ENCODE measurements at regions of chr15 and their contacts with region 1.

Region 1: DNA sequence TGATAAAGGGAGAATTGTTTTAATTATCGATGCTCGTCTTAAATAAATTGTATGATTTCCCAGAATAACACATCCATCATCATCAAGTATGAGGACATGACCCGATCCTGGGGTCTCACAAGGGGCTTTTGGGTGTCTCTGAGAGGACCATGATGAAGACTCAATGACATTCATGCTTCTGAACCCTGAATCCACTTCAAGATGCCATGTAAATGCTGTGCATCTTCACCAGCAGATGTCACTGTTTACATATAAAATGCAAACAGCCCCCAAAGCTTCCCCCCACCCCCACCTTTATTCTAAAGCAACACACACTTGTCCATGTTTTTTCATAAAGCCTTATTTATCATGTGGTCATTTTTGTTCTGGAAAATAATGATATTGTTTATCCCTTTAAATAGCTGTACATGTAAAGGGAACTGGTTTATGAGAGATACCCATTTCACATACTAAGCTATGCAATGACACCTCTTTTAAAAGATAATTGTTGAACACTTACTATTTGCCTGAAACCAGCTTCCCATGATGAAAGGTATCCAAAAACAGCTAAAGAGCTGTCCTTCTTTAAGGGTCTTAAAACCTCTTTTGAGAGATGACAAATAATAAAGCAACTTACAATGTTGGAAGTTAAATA is 69.7 kb upstream of the UBE3A start:
- DNase-seq: no peak
- ATAC-seq: peak; percentile 36; the same call in 1 of the 2 replicates
- H3K4me3 Mint-ChIP-seq: no peak overlapping the region
- H3K27ac Mint-ChIP-seq: no peak overlapping the region
- H3K4me1 Mint-ChIP-seq: peaks cover 51% of the 10 kb centered on the region
- H3K27me3 Mint-ChIP-seq: no peaks in the 10 kb centered on the region; the same call in 1 of the 2 replicates
- CTCF ChIP-seq: peak; percentile 36; the same call in 1 of the 2 replicates

Region 2: DNA sequence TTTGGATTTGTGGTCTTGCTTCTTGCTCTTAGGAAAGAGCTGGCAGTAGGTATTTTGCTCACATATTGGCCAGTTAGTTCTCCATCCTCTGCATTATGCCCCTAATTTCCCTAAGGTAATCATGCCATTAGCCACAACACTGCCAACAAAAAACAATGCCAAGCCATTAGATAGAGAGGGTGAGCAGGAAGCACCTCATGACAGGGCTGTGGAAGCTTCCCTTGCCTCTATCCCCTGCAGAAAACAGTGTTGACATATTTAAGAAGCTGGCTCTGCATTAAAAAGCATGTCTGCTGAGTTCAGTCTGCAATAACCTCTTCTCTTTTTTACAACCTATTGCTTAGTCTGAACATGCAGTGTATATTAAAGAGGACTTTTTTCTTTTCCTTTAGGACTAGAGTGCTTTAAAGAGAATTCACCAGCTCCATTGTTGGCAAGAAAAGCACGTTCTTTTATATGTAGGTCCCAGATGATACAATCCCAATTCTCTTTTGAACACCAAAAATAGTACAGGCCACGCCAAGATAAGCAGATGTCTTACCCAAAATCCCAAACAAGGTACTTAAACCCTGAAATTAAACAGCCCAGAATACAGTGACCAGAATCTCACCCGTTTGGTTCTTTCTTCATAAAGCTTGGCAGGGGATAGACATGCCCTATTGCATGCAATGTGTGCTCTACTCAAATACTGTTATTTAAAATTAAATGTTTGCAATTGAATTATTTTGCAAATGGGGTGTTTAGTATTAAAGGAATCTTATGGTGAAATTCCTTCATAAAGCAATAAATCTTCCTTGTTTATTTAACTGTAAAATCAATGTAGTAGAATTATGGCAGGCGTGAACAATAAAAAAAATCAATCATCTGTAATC is 24.0 kb after region 1 on chr15:
- CTCF ChIA-PET with region 1: interaction called, 10 read pairs
- POLR2A ChIA-PET with region 1: no interaction called
- DNase-seq: no peak
- ATAC-seq: no peak
- H3K4me3 Mint-ChIP-seq: no peak overlapping the region
- H3K27ac Mint-ChIP-seq: no peak overlapping the region
- H3K4me1 Mint-ChIP-seq: peaks cover 42% of the 10 kb centered on the region
- H3K27me3 Mint-ChIP-seq: no peaks in the 10 kb centered on the region
- CTCF ChIP-seq: no peak

Region 3: DNA sequence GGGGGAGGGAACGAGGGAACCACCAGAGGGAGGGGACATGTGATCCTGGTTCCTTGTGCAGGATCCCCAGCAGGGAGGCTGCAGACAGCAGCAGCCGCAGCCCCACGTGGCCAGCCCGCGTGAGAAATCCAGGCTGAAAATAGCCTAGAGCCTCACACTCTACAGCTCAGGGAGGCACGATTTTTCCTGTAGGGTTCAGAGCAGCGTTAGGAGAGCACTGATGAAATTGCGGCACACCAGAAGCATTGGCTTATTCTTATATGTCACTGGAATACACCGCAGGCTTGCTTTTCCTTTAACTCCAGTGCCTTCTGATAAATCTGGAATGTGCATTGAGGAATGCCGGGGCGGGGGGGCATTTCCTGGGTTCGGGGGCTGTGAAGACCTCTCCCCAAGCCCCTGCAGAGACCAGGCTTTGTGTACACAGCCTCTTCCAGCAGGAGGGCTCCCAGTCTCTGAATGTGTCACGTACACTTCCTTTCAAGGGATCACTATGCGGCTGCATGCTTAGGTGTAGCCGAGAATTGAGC is 161.6 kb after region 1 on chr15:
- CTCF ChIA-PET with region 1: interaction called, 14 read pairs
- POLR2A ChIA-PET with region 1: no interaction called
- DNase-seq: peak; percentile 76
- ATAC-seq: peak; percentile 90
- H3K4me3 Mint-ChIP-seq: peak overlapping the region; percentile 55
- H3K27ac Mint-ChIP-seq: peak overlapping the region; percentile 95
- H3K4me1 Mint-ChIP-seq: peaks cover 60% of the 10 kb centered on the region
- H3K27me3 Mint-ChIP-seq: no peaks in the 10 kb centered on the region
- CTCF ChIP-seq: no peak

Region 4: DNA sequence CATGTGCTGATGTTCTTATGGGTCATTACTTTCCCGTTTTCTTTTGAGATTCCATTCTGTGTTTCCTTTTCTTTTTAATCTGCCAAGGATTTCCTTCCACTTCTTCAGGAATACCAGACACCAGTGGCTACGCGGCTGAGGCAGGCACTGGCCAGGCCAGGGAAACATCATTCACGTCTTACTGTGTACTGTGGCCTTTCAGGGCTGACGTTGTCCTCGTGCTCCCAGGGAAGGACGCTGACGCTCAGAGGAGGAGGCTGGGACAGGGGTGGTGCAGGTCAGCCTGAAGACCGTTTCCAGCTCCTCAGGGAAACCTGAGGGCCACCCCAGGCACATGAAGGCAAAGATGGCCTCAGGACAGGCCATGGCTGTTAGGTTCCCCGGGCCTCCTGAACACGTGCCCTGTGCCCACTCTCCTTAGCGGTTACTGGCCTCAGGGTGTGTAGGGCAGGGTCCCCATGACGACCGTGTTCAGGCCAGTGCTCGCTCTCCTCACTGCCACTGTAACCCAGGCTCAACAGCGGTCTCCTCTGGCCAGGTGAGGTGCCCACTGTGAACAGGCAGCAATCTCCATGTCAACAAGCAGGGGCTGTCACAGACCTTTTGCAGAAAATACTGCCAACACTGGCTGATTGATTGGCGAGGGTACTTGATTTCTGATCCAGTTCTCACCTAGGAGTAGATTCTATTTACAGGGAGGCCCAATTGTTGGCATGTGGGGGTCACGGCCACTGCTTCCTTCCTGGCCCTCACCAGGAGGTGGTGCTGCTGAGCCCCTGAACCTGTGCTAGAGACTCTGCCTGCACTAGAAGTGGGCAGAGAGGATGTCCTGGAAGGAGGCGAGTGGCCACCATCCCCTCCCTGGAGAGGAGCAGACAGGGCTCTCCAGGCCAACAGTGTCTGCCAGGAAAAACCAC is 185.1 kb after region 1 on chr15:
- CTCF ChIA-PET with region 1: interaction called, 110 read pairs
- POLR2A ChIA-PET with region 1: no interaction called
- DNase-seq: peak; percentile 75
- ATAC-seq: peak; percentile 81
- H3K4me3 Mint-ChIP-seq: no peak overlapping the region
- H3K27ac Mint-ChIP-seq: no peak overlapping the region
- H3K4me1 Mint-ChIP-seq: peaks cover 38% of the 10 kb centered on the region
- H3K27me3 Mint-ChIP-seq: no peaks in the 10 kb centered on the region
- CTCF ChIP-seq: peak; percentile 64

Region 5: DNA sequence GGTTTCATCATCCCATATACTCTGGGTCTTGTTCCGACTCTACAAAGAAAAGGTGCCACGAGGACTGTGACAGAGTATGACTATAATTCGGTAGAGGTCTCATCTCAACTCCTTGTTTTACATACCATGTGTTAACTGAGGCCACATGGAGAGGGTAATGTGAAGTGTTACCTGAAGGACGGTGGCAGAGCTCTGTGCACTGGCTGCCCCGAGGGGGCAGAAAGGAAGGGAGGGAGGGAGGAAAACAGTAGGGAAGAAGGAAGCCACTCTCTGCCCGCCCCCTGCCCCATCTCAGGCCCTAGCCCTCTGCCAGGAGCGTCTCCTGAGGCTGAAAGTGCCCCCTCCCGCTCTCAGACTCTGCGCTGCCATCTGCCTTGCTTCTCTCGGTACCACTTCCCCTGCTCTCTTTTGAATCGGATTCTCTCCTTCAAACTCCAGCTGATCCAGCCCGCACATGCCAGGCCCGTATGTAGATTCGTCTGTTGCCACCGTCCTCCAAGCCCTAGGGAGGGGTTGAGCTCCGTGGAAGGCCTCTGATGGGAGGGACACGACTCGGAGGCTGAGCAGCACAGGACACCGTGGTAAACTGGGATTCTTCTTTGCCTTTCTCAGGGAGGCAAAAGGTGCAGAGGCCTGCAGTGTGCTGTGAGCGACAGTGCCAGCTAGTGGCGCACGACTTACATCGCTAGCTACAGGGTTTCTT is 425.1 kb after region 1 on chr15:
- CTCF ChIA-PET with region 1: interaction called, 11 read pairs
- POLR2A ChIA-PET with region 1: interaction called, 3 read pairs
- DNase-seq: peak; percentile 73
- ATAC-seq: peak; percentile 95
- H3K4me3 Mint-ChIP-seq: peak overlapping the region; percentile 71
- H3K27ac Mint-ChIP-seq: no peak overlapping the region
- H3K4me1 Mint-ChIP-seq: peaks cover 12% of the 10 kb centered on the region
- H3K27me3 Mint-ChIP-seq: no peaks in the 10 kb centered on the region
- CTCF ChIP-seq: peak; percentile 36; the same call in 1 of the 2 replicates